Activated CD8-positive, alpha-beta memory T cell treated with anti-CD3 and anti-CD28 coated beads, Interleukin-2, amount 10 ng/mL, durations not matched to agents 7 days and 5 days (primary cell): ENCODE measurements at regions of chr2 and their contacts with region 1.

Region 1: GRCh38 chr2:223993621-223994232 is 36.5 kb downstream of the MRPL44 start:
- DNase-seq: peak; percentile 75
- ATAC-seq: peak; percentile 79
- H3K4me3 Mint-ChIP-seq: no peak overlapping the region
- H3K27ac Mint-ChIP-seq: no peak overlapping the region
- H3K4me1 Mint-ChIP-seq: peaks cover 11% of the 10 kb centered on the region
- H3K27me3 Mint-ChIP-seq: no peaks in the 10 kb centered on the region

Region 2: GRCh38 chr2:224004105-224004695 is 10.5 kb after region 1 on chr2:
- CTCF ChIA-PET with region 1: interaction called, 17 read pairs
- DNase-seq: no peak
- ATAC-seq: no peak
- H3K4me3 Mint-ChIP-seq: no peak overlapping the region
- H3K27ac Mint-ChIP-seq: no peak overlapping the region
- H3K4me1 Mint-ChIP-seq: no peaks in the 10 kb centered on the region
- H3K27me3 Mint-ChIP-seq: no peaks in the 10 kb centered on the region

Region 3: DNA sequence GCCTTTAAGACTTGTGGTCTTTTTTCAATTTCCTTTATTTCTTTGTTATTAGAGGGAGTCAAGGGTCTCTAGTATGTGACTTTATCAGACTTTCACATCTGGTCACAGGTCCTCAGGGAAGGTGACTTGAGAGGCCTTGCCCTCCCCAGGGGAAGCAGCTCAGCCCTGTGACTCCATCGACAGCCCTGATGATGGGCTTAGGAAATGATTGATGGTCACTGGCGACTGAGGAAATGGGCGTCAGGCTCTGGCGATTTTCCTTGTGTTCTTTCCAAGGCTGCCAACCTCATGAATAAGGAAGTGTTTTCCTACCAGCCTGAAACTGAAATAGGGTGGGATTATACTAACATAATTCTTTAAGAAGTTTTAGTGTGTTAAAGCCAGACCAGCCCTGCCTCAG is 24.2 kb after region 1 on chr2:
- CTCF ChIA-PET with region 1: interaction called, 10 read pairs
- DNase-seq: no peak
- ATAC-seq: no peak
- H3K4me3 Mint-ChIP-seq: no peak overlapping the region
- H3K27ac Mint-ChIP-seq: no peak overlapping the region
- H3K4me1 Mint-ChIP-seq: peaks cover 3% of the 10 kb centered on the region
- H3K27me3 Mint-ChIP-seq: no peaks in the 10 kb centered on the region

Region 4: DNA sequence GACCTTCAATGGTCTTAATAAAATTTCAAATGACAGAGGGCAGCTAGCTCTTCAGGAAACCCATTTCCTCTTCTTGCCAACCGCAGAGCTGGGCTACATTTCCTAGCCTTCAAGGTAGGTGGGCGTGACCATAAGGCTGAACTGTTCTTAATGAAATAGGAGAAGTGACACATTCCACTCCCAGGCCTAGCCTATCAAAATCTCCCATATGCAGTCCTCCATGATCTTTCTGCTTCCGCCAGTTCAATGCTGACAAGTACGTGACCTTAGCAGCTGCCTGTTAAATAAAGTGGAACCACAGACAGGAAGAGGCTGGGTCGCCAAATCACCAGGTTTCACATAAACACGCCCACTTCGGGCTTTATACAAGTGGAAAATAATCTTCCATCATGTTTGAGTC is 32.1 kb after region 1 on chr2:
- CTCF ChIA-PET with region 1: interaction called, 17 read pairs
- DNase-seq: peak; percentile 82
- ATAC-seq: peak; percentile 91
- H3K4me3 Mint-ChIP-seq: peak overlapping the region; percentile 0
- H3K27ac Mint-ChIP-seq: peak overlapping the region; percentile 86
- H3K4me1 Mint-ChIP-seq: peaks cover 28% of the 10 kb centered on the region
- H3K27me3 Mint-ChIP-seq: no peaks in the 10 kb centered on the region

Region 5: DNA sequence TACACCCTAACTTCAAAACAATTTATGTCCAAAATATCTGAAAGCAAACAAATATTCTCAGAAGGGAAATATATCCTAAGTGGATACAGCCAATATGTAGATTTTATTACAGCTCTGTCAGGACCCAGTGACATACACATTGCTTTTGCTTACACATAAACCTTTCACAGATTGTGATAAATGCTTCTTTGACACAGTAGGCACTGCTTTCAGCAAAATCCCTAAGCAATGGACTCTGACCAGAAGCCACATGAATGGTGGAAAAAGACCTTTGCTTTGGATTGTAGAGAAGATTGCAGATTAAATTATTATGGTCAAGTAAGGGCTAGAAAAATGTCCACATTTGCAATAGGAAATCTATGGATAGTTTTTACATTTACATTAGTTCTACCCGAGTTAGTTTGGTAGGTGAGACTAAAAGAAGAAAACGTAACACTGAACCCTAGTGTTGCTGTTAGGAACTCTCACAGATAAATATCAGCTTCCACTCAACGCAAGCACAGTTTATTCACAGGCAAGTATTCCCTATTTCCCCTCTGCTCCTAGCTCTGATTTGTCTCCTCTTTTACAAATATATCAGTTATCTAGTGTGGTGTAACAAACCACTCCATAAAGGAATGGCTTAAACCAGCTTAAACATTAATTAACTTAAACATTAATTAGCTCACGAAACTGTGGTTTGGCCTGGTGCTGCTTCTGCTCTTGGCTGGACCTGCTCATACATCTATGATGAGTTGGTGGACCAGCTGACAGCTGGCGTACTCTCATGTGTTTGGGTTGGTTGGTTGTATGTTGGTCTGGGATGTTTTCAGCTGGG is 69.0 kb after region 1 on chr2:
- CTCF ChIA-PET with region 1: interaction called, 11 read pairs
- DNase-seq: no peak
- ATAC-seq: no peak
- H3K4me3 Mint-ChIP-seq: no peak overlapping the region
- H3K27ac Mint-ChIP-seq: no peak overlapping the region
- H3K4me1 Mint-ChIP-seq: no peaks in the 10 kb centered on the region
- H3K27me3 Mint-ChIP-seq: peaks cover 12% of the 10 kb centered on the region

Region 6: DNA sequence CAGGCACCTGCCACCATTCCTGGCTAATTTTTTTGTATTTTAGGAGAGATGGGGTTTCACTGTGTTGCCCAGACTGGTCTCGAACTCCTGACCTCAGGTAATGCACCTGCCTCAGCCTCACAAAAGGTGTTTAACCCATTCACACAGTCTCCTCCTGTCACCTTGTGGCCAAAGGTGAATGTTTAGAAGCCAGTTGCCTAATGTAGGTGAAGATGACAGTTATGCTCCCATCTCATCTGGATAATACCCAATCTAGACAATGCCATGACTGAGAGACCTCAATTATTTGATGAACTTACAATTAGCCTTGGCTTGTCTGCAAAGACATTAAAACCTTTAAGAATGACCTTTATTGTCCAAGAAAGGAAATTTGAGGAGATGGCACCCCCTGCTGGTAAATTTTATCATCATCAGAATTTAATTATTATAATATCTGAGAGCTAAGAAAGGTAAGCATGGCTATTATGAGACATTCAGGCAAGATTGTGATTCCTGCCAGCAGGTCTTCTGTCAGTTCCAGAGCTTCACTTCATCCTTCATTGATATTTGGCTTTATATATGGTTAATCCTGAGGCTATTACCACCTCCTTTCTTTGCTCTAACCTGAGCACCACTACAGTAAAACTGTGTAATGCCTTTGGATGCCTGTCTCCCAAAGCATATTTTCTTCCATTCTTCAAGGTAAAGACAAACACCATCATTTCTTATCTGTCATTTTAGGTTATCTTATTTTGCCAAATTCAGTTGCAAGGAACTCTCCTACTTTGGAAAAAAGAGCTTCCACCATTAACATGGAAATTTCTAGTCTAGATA is 290.6 kb after region 1 on chr2:
- CTCF ChIA-PET with region 1: interaction called, 95 read pairs
- DNase-seq: no peak
- ATAC-seq: peak; percentile 33
- H3K4me3 Mint-ChIP-seq: no peak overlapping the region
- H3K27ac Mint-ChIP-seq: no peak overlapping the region
- H3K4me1 Mint-ChIP-seq: no peaks in the 10 kb centered on the region
- H3K27me3 Mint-ChIP-seq: peaks cover 42% of the 10 kb centered on the region